ENCODE measurements at regions of chr16 and their contacts with region 1.

Region 1: GRCh38 chr16:54286090-54286993 is at the start of gene IRX3:
- DNase-seq: peak; percentile 13
- H3K4me3 ChIP-seq: peak within 1 kb of the TSS; percentile 27 to 58 (median 34)
- H3K27ac ChIP-seq: no peak within 1 kb of the TSS
- H3K4me1 ChIP-seq: peaks cover 12 to 69% (median 52%) of the 10 kb centered on the region in 4 donors
- H3K27me3 ChIP-seq: peaks cover 100% of the 10 kb centered on the region
- CTCF ChIP-seq: no peak
- EP300 ChIP-seq: no peak
- POLR2A ChIP-seq: no peak
- total RNA-seq, gene IRX3: 0.16 TPM in 1 of 4 donors, not detected in the others

Region 2: DNA sequence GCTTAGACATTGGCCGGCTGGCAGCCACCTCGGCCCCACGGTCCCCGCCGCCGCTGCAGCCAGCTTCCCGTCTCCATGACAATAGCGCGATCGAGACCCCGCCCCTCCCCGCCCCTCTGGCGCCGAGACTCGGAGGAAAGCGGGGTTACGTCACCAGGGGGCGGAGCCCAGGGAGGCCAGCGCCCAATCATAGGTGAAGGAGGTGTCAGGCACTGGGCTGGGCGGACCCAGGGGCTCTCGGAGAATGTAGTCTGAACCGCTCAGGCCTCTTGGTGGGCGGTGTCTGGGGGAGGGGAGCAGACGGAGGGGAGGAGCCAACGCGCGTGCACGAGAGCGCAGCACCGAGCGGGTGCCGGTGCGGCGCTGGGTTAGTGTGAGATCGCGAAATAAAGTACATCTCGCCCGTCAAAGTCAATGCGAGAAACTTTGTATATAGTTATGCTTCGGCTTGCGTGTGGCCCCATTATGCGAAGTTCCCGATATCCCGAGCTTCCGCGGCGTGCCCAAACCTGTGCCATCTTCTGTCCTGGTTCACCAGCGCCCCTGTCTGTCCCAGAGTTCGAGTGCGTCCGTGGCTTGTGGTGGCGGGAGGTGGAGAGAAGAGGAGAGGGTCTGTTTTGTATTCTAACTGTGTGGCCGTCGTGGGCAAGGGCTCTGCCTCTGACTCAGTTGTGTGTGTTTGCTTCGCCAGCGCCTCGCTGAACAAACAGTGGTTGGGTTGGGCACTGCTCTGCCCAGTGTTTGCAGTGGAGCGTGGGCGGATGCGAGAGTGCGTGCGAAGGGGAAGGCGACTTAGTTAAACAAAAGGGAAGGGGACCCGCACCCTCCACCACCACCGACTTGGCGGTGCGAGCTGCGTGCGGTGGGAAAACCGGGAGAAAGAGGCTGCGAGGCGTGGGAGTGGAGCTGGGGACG is 643.0 kb after region 1 on chr16:
- in situ Hi-C with region 1: loop called in 1 of 4 experiments (anchors 25 kb)
- intact Hi-C with region 1: no loop called
- DNase-seq: peak; percentile 97
- H3K4me3 ChIP-seq: peak overlapping the region; percentile 32 to 66 (median 46)
- H3K27ac ChIP-seq: peak overlapping the region in 1 of 4 donors; percentile 49
- H3K4me1 ChIP-seq: peaks cover 7 to 34% (median 23%) of the 10 kb centered on the region in 4 donors
- H3K27me3 ChIP-seq: peaks cover 96% of the 10 kb centered on the region
- CTCF ChIP-seq: no peak
- EP300 ChIP-seq: no peak
- POLR2A ChIP-seq: peak; percentile 17